ENCODE measurements at regions of chr5 and their contacts with region 1.

Region 1: GRCh38 chr5:43609752-43610151 is 6.8 kb downstream of the NNT start:
- DNase-seq: no peak
- ATAC-seq: peak in 1 of 4 donors; percentile 36
- H3K4me3 ChIP-seq: no peak overlapping the region
- H3K27ac ChIP-seq: peak overlapping the region; percentile 37
- H3K4me1 ChIP-seq: peaks cover 34% of the 10 kb centered on the region
- H3K27me3 ChIP-seq: no peaks in the 10 kb centered on the region
- CTCF ChIP-seq: no peak

Region 2: DNA sequence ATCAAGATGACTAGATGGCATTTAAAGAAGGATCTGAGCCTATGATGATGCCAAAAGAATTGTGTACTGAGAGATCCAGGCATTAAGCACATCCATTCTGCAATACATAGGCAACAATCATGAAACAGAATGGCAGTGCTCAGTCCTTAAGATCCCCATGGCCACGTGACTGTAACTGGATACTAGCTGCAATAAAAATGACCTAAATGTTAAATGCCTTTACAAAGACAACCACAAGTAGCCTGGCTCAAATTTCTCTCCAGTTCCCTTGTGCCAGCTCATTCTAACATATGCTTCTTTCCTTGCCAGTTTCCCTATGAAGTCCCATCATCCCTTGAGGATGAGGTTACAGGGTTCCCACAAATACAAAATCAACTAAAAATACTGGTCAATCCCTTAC is 1334.8 kb before region 1 on chr5:
- intact Hi-C with region 1: no loop called
- DNase-seq: no peak
- ATAC-seq: no peak
- H3K4me3 ChIP-seq: no peak overlapping the region
- H3K27ac ChIP-seq: no peak overlapping the region
- H3K4me1 ChIP-seq: no peaks in the 10 kb centered on the region
- H3K27me3 ChIP-seq: no peaks in the 10 kb centered on the region
- CTCF ChIP-seq: no peak

Region 3: GRCh38 chr5:43573058-43573457 is 36.7 kb before region 1 on chr5:
- intact Hi-C with region 1: loop called in 1 of 2 experiments (anchors 5 kb)
- DNase-seq: no peak
- ATAC-seq: no peak
- H3K4me3 ChIP-seq: no peak overlapping the region
- H3K27ac ChIP-seq: peak overlapping the region; percentile 47
- H3K4me1 ChIP-seq: peaks cover 21% of the 10 kb centered on the region
- H3K27me3 ChIP-seq: no peaks in the 10 kb centered on the region
- CTCF ChIP-seq: no peak

Region 4: GRCh38 chr5:43674536-43674935 is 64.8 kb after region 1 on chr5:
- intact Hi-C with region 1: no loop called
- DNase-seq: no peak
- ATAC-seq: no peak
- H3K4me3 ChIP-seq: no peak overlapping the region
- H3K27ac ChIP-seq: no peak overlapping the region
- H3K4me1 ChIP-seq: peaks cover 5% of the 10 kb centered on the region
- H3K27me3 ChIP-seq: no peaks in the 10 kb centered on the region
- CTCF ChIP-seq: no peak